ENCODE measurements at regions of chr1 and their contacts with region 1.

Region 1: GRCh38 chr1:53945433-53946251 is at the start of gene IFT25:
- DNase-seq: peak; percentile 99
- ATAC-seq: peak; percentile 79
- H3K4me3 Mint-ChIP-seq: peak within 1 kb of the TSS; percentile 95
- H3K27ac Mint-ChIP-seq: peak within 1 kb of the TSS; percentile 89
- H3K4me1 Mint-ChIP-seq: peaks cover 50% of the 10 kb centered on the region
- H3K27me3 Mint-ChIP-seq: no peaks in the 10 kb centered on the region
- total RNA-seq, gene IFT25: 56.6 to 62.0 TPM

Region 2: GRCh38 chr1:53220171-53220961 is 725.3 kb before region 1 on chr1 and contains the start of gene CZIB:
- CTCF ChIA-PET with region 1: no interaction called
- POLR2A ChIA-PET with region 1: no interaction called
- intact Hi-C with region 1: loop called in 1 of 2 experiments (anchors 5 kb)
- DNase-seq: peak; percentile 98
- ATAC-seq: peak; percentile 95
- H3K4me3 Mint-ChIP-seq: peak within 1 kb of the TSS; percentile 87
- H3K27ac Mint-ChIP-seq: peak within 1 kb of the TSS; percentile 94
- H3K4me1 Mint-ChIP-seq: peaks cover 24% of the 10 kb centered on the region
- H3K27me3 Mint-ChIP-seq: no peaks in the 10 kb centered on the region
- total RNA-seq, gene CZIB: 45.4 to 48.7 TPM

Region 3: GRCh38 chr1:53681977-53682685 is 263.5 kb before region 1 on chr1:
- CTCF ChIA-PET with region 1: no interaction called
- POLR2A ChIA-PET with region 1: no interaction called
- intact Hi-C with region 1: no loop called
- DNase-seq: peak; percentile 69
- ATAC-seq: peak; percentile 80
- H3K4me3 Mint-ChIP-seq: no peak overlapping the region
- H3K27ac Mint-ChIP-seq: no peak overlapping the region
- H3K4me1 Mint-ChIP-seq: peaks cover 5% of the 10 kb centered on the region
- H3K27me3 Mint-ChIP-seq: peaks cover 7% of the 10 kb centered on the region

Region 4: DNA sequence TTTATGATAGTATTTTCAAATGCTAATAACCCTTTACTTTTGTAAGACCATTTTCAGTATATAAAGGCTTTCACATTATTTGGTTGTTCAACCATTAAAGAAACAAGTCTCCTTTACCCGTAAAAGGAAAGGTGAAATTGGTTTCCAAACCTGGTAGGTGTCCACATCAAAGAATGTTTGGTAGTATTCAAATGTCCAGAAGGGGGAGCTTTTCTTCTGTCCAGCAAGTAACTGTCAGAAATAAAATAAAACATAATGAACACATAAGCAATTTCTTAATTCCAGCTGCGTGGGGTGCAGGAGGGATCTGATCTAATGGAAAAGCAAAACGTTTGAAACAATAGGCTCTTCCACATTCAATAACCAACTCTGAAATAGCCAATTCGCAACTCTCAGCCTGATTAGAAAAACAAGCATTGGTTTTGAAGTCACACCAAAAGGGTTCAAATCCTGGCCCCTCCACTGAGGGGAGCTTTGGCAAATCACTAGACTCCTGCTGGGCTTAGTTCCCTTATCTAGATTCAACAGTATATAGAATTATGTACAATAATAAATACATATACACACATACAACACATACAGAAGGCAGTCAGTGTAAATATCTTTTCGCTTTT is 67.0 kb before region 1 on chr1:
- CTCF ChIA-PET with region 1: interaction called, 29 read pairs
- POLR2A ChIA-PET with region 1: interaction called, 4 read pairs
- intact Hi-C with region 1: loop called (anchors 1 to 2 kb)
- DNase-seq: no peak
- ATAC-seq: peak; percentile 36
- H3K4me3 Mint-ChIP-seq: no peak overlapping the region
- H3K27ac Mint-ChIP-seq: no peak overlapping the region
- H3K4me1 Mint-ChIP-seq: peaks cover 4% of the 10 kb centered on the region
- H3K27me3 Mint-ChIP-seq: no peaks in the 10 kb centered on the region

Region 5: DNA sequence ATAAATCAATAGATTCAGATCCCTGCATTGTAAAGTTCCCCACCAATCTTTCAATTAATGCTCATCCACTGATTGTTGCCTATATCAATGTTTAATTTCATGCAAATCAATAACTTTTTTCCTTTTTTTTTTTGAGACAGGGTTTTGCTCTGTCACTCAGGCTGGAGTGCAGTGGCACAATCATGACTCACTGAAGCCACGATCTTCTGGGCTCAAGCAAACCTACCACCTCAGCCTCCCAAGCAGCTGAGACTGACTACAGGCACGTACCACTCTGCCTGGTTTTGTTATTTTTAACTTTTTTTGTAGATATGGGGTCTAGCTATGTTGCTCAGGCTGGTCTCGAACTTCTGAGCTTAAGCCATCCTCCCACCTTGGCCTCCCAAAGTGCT is 26.0 kb before region 1 on chr1:
- CTCF ChIA-PET with region 1: interaction called, 3 read pairs
- POLR2A ChIA-PET with region 1: no interaction called
- intact Hi-C with region 1: loop called (anchors 1 to 2 kb)
- DNase-seq: peak; percentile 59
- ATAC-seq: peak; percentile 90
- H3K4me3 Mint-ChIP-seq: no peak overlapping the region
- H3K27ac Mint-ChIP-seq: peak overlapping the region; percentile 85
- H3K4me1 Mint-ChIP-seq: peaks cover 28% of the 10 kb centered on the region
- H3K27me3 Mint-ChIP-seq: no peaks in the 10 kb centered on the region

Measured in activated CD4-positive, alpha-beta T cell treated with anti-CD3 and anti-CD28 coated beads for 36 hours (primary cell).